Heart left ventricle (tissue), 16 donors: ENCODE measurements at regions of chr1 and their contacts with region 1.

Region 1: GRCh38 chr1:77978969-77979876 is at the start of gene FUBP1:
- DNase-seq: peak; percentile 95 to 96 (median 95)
- ATAC-seq: peak; percentile 91 to 94 (median 94)
- H3K4me3 ChIP-seq: peak within 1 kb of the TSS; percentile 42 to 92 (median 80)
- H3K27ac ChIP-seq: peak within 1 kb of the TSS; percentile 91 to 99 (median 96)
- H3K4me1 ChIP-seq: peaks cover 0 to 63% (median 41%) of the 10 kb centered on the region in 12 donors
- H3K27me3 ChIP-seq: no peaks in the 10 kb centered on the region
- CTCF ChIP-seq: peak; percentile 51 to 90 (median 72)
- POLR2A ChIP-seq: peak in 1 of 2 donors; percentile 73
- total RNA-seq, gene FUBP1: 40.5 to 78.9 (median 64.3) TPM

Region 2: DNA sequence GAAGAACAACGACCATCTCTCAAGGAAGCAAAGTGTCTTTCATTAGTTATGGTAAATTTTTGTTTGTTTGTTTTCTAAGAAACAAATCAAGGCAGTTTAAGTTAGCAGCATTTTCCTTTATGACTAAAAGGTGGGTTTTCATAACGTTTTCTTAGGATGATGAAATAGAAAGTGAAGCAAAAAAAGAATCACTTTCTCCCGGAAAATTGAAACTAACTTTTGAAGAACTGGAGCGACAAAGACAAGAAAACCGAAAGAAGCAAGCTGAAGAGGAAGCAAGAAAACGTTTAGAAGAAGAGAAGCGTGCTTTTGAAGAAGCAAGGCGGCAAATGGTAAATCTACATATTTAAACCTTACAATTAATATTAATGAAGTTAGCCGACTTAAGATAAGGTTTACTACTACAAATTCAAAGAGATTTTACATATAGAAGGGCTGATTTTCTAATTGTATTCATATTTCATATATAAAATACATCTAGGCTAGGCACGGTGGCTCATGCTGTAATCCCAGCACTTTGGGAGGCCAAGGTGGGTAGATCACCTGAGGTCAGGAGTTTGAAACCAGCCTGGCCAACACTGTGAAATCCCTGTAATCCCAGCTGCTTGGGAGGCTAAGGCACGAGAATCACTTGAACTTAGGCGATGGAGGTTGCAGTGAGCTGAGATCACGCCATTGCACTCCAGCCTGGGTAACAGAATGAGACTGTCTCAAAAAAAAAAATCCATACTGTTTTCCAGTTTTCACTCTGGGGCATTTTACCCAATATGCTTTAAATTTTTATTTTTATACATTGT is 52.5 kb before region 1 on chr1:
- intact Hi-C with region 1: no loop called
- DNase-seq: no peak
- ATAC-seq: no peak
- H3K4me3 ChIP-seq: peak overlapping the region in 7 of 12 donors; percentile 18 to 52 (median 25)
- H3K27ac ChIP-seq: peak overlapping the region in 8 of 12 donors; percentile 7 to 61 (median 32)
- H3K4me1 ChIP-seq: peaks cover 0 to 15% (median 0%) of the 10 kb centered on the region in 12 donors
- H3K27me3 ChIP-seq: no peaks in the 10 kb centered on the region
- CTCF ChIP-seq: no peak
- POLR2A ChIP-seq: no peak

Region 3: DNA sequence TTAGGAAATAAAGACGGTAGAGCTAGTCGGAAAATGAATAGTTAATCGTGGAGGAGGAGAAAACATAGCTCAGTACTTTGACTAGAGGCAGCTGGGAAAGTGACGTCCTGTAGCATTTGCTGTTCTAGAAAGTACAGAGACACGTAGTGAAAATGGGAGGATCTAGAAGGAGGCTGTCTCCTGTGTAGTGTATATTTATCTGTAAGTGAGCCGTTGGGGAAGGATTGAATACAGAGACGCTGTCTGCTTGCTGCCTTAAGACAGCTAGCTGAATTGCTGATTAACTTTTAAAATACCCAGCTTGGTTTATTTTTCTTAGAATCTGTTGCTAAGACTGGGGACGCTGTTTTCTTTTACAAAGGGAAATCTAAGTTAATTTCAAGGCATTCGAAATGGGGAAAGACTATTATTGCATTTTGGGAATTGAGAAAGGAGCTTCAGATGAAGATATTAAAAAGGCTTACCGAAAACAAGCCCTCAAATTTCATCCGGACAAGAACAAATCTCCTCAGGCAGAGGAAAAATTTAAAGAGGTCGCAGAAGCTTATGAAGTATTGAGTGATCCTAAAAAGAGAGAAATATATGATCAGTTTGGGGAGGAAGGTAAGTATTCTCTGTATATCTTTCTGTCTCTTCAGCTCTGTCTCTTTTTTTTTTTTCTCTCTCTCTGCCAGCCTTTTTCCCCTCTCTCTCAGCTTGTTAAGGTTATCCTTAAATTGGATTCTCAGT is 25.7 kb after region 1 on chr1 and contains the start of gene DNAJB4:
- intact Hi-C with region 1: loop called (anchors 1 to 5 kb)
- DNase-seq: peak in 4 of 5 donors; percentile 51 to 86 (median 81)
- ATAC-seq: peak; percentile 99 to 100 (median 99)
- H3K4me3 ChIP-seq: peak within 1 kb of the TSS; percentile 33 to 73 (median 64)
- H3K27ac ChIP-seq: peak within 1 kb of the TSS; percentile 89 to 96 (median 92)
- H3K4me1 ChIP-seq: peaks cover 0 to 52% (median 19%) of the 10 kb centered on the region in 12 donors
- H3K27me3 ChIP-seq: no peaks in the 10 kb centered on the region
- CTCF ChIP-seq: no peak
- POLR2A ChIP-seq: peak; percentile 98 to 99
- total RNA-seq, gene DNAJB4: 56.7 to 190 (median 95.9) TPM